CD4-positive, alpha-beta T cell (primary cell): ENCODE measurements at regions of chr5 and their contacts with region 1.

Region 1: DNA sequence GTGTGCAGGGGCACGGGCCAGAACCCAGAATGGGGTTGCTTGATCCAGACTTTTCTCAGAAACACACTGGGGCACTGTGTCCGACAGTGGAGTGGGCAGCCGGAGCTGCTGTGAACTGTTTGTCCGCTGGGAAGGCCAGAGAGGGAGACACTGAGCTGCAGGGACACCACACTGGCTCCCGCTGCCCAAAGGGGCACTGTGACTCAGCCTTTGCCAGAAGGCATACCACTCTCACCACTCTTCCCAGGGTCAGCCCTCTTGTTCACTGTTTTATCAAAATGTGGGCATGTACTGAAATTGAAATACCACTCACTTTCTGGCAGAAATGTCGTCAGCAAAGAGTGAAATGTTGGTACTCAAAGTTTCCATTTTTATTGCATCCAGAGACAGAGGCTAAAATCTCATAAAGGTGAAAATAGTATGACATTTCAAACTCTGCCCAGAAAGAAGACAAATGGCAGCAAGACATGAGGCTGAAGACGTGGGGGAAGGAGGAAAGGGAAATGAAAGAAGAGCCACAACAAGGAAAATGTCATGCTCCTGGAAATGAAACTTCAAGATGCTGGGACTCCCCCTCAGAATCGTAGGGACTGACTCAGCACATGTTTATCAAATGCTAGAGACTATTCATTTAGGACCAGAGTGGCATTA is 4.5 kb upstream of the IL7R start:
- DNase-seq: peak in 6 of 14 experiments; percentile 15 to 84 (median 70)
- ATAC-seq: no peak
- H3K4me3 ChIP-seq: peak overlapping the region; percentile 88
- H3K4me3 Mint-ChIP-seq: peak overlapping the region; percentile 80
- H3K27ac ChIP-seq: peak overlapping the region; percentile 97 to 98
- H3K27ac Mint-ChIP-seq: peak overlapping the region; percentile 99
- H3K4me1 ChIP-seq: peaks cover 50% of the 10 kb centered on the region
- H3K4me1 Mint-ChIP-seq: peaks cover 85% of the 10 kb centered on the region
- H3K27me3 ChIP-seq: no peaks in the 10 kb centered on the region
- H3K27me3 Mint-ChIP-seq: no peaks in the 10 kb centered on the region
- CTCF ChIP-seq: no peak

Region 2: GRCh38 chr5:35656721-35657120 is 195.5 kb before region 1 on chr5:
- CTCF ChIA-PET with region 1: interaction called, 10 read pairs
- POLR2A ChIA-PET with region 1: interaction called, 64 read pairs
- intact Hi-C with region 1: no loop called
- DNase-seq: no peak
- ATAC-seq: no peak
- H3K4me3 ChIP-seq: no peak overlapping the region
- H3K4me3 Mint-ChIP-seq: no peak overlapping the region
- H3K27ac ChIP-seq: no peak overlapping the region
- H3K27ac Mint-ChIP-seq: no peak overlapping the region
- H3K4me1 ChIP-seq: no peaks in the 10 kb centered on the region
- H3K4me1 Mint-ChIP-seq: peaks cover 31% of the 10 kb centered on the region
- H3K27me3 ChIP-seq: no peaks in the 10 kb centered on the region
- H3K27me3 Mint-ChIP-seq: no peaks in the 10 kb centered on the region
- CTCF ChIP-seq: no peak

Region 3: DNA sequence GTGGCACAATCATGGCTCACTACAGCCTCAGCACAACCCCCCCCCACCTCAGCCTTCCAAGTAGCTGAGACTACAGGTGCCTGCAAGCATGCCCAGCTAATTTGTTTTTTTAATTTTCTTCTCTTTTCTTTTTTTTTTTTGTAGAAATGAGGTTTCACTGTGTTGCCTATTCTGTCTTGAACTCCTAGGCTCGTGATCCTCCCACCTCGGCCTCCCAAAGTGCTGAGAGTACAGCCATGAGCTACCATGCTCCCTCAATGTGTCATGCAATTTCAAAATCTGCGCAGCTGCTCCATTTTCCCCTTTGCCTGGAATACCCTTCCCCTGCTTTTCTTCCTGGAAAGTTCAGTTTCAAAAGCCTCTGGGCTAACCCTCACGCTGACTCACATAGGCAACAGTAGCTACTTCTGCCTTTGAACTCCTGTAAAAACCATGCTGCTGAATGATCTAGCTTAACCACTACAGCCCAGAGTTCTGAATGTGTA is 66.6 kb before region 1 on chr5:
- CTCF ChIA-PET with region 1: interaction called, 7 read pairs
- POLR2A ChIA-PET with region 1: interaction called, 384 read pairs
- intact Hi-C with region 1: no loop called
- DNase-seq: peak in 4 of 14 experiments; percentile 15 to 43 (median 25)
- ATAC-seq: peak; percentile 71
- H3K4me3 ChIP-seq: no peak overlapping the region
- H3K4me3 Mint-ChIP-seq: peak overlapping the region; percentile 64
- H3K27ac ChIP-seq: no peak overlapping the region
- H3K27ac Mint-ChIP-seq: peak overlapping the region; percentile 79
- H3K4me1 ChIP-seq: peaks cover 40% of the 10 kb centered on the region
- H3K4me1 Mint-ChIP-seq: peaks cover 86% of the 10 kb centered on the region
- H3K27me3 ChIP-seq: no peaks in the 10 kb centered on the region
- H3K27me3 Mint-ChIP-seq: no peaks in the 10 kb centered on the region
- CTCF ChIP-seq: no peak

Region 4: GRCh38 chr5:35815089-35815936 is 36.9 kb before region 1 on chr5:
- CTCF ChIA-PET with region 1: interaction called, 9 read pairs
- POLR2A ChIA-PET with region 1: interaction called, 576 read pairs
- intact Hi-C with region 1: loop called (anchors 1 to 5 kb)
- DNase-seq: peak in 4 of 14 experiments; percentile 47 to 75 (median 69)
- ATAC-seq: peak; percentile 27
- H3K4me3 ChIP-seq: no peak overlapping the region
- H3K4me3 Mint-ChIP-seq: no peak overlapping the region
- H3K27ac ChIP-seq: peak overlapping the region; percentile 8 to 59
- H3K27ac Mint-ChIP-seq: no peak overlapping the region
- H3K4me1 ChIP-seq: peaks cover 65% of the 10 kb centered on the region
- H3K4me1 Mint-ChIP-seq: peaks cover 39% of the 10 kb centered on the region
- H3K27me3 ChIP-seq: no peaks in the 10 kb centered on the region
- H3K27me3 Mint-ChIP-seq: no peaks in the 10 kb centered on the region
- CTCF ChIP-seq: peak; percentile 64

Region 5: DNA sequence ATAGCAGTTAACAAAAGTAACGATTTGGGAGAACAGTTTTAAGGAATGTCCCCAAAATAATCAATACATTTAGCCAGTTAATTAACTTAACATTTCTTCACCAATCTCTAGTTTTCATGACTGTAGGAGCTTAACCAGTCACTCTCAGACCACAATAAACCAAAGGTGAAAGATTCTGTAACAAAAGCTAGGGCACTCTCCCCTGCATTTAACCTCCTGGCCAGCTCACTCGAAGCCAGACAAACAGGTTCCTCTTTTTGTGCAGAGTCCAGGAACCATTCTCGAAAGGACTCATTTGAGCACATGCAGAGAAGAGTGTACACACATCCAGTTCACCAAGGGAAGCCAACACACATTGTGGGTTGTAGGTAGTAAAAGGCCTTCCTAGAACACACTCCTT is 10.9 kb after region 1 on chr5:
- CTCF ChIA-PET with region 1: interaction called, 4 read pairs
- POLR2A ChIA-PET with region 1: interaction called, 33 read pairs
- intact Hi-C with region 1: no loop called
- DNase-seq: no peak
- ATAC-seq: no peak
- H3K4me3 ChIP-seq: peak overlapping the region; percentile 88
- H3K4me3 Mint-ChIP-seq: peak overlapping the region; percentile 93
- H3K27ac ChIP-seq: peak overlapping the region; percentile 43 to 63
- H3K27ac Mint-ChIP-seq: peak overlapping the region; percentile 99
- H3K4me1 ChIP-seq: peaks cover 18% of the 10 kb centered on the region
- H3K4me1 Mint-ChIP-seq: peaks cover 83% of the 10 kb centered on the region
- H3K27me3 ChIP-seq: no peaks in the 10 kb centered on the region
- H3K27me3 Mint-ChIP-seq: no peaks in the 10 kb centered on the region
- CTCF ChIP-seq: no peak

Region 6: DNA sequence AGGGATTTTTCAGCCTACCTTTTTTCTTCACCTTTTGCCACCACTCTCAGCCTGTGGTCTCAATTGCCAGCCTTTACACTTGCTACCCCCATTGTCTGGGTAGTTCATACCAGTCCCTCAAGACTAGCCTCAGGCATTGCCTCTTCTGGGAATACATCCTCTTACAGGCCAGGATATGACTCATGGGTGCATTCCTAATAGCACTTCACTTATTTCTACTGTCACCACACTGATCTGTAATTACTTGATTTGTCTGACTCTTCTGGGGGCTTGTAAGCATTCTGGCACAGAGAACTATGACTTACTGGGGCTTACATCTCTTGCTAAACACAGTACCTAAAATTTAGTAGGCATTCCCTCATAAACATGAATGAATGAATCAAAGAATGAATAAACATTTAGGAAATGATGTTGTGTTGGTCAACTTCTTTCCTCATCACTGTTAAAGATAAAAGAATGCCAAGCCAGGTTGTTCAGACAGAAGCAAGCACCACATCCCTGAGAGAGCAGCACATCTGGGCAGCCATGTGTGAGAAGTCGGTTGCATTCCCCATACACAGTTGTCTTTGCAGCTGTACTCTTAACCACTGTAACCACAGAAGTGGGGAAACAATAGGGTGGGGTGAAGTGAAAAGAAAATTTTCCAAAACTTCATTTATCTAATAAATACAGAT is 32.0 kb after region 1 on chr5:
- CTCF ChIA-PET with region 1: no interaction called
- POLR2A ChIA-PET with region 1: interaction called, 82 read pairs
- intact Hi-C with region 1: loop called in 1 of 2 experiments (anchors 2 kb)
- DNase-seq: peak in 2 of 14 experiments; percentile 50 to 51
- ATAC-seq: peak; percentile 27
- H3K4me3 ChIP-seq: no peak overlapping the region
- H3K4me3 Mint-ChIP-seq: no peak overlapping the region
- H3K27ac ChIP-seq: no peak overlapping the region
- H3K27ac Mint-ChIP-seq: peak overlapping the region; percentile 55
- H3K4me1 ChIP-seq: peaks cover 21% of the 10 kb centered on the region
- H3K4me1 Mint-ChIP-seq: peaks cover 55% of the 10 kb centered on the region
- H3K27me3 ChIP-seq: no peaks in the 10 kb centered on the region
- H3K27me3 Mint-ChIP-seq: no peaks in the 10 kb centered on the region
- CTCF ChIP-seq: no peak

Region 7: DNA sequence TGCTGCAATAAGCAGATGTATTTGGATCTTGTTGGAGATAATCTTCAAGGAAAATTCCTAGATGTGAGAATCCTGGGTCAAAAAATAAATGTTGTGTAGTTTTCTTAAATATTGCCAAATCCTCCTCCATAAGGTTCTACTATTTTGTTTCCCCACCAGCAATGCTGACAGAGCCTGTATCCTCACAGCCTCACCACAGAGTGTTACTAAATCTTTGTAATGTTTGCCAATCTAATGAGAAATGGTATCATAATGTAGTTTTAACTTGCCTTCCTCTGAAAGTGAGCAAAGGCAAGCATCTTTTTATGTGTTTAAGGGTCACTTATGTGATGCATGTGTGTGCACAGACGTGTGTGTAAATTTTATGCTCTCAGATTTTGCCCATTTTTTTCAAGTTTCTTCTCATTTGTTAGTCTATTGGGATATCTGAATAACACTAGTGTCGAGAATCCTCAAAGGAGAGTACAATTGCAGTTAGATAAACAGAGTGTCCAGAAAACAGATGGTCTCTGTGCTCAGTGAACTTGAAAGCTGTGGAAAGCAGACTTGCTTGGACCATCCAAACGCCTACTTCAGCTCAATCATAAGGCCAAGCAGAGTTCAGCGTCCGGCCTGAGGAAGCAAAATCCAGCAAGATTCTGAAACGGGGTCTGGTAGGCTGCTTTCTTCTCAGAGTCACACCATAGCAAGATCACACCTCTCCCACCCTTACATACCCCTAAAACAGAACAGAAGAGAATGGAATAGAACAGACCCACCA is 174.7 kb after region 1 on chr5:
- CTCF ChIA-PET with region 1: no interaction called
- POLR2A ChIA-PET with region 1: no interaction called
- intact Hi-C with region 1: no loop called
- DNase-seq: no peak
- ATAC-seq: no peak
- H3K4me3 ChIP-seq: no peak overlapping the region
- H3K4me3 Mint-ChIP-seq: no peak overlapping the region
- H3K27ac ChIP-seq: no peak overlapping the region
- H3K27ac Mint-ChIP-seq: no peak overlapping the region
- H3K4me1 ChIP-seq: no peaks in the 10 kb centered on the region
- H3K4me1 Mint-ChIP-seq: no peaks in the 10 kb centered on the region
- H3K27me3 ChIP-seq: no peaks in the 10 kb centered on the region
- H3K27me3 Mint-ChIP-seq: peaks cover 25% of the 10 kb centered on the region
- CTCF ChIP-seq: no peak

Region 8: DNA sequence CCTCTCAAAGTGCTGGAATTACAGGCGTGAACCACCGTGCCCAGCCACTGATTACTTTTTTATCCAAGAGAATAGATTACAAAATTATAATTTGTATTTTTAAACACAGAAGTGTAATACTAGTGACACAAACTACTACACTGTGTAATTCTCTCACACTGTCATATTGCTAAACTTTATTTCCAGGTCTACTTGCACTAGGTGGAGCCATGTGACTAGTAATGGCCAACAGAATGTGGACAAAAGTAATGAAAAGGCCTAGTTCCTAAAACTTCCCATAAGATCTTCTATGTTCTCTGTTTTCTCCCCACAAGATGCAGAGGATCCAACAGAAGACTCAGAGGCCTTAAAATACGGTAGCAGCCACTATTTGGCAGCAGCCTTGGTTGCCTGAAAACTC is 362.2 kb after region 1 on chr5:
- CTCF ChIA-PET with region 1: no interaction called
- POLR2A ChIA-PET with region 1: no interaction called
- intact Hi-C with region 1: no loop called
- DNase-seq: peak in 2 of 14 experiments; percentile 9
- ATAC-seq: no peak
- H3K4me3 ChIP-seq: no peak overlapping the region
- H3K4me3 Mint-ChIP-seq: no peak overlapping the region
- H3K27ac ChIP-seq: no peak overlapping the region
- H3K27ac Mint-ChIP-seq: no peak overlapping the region
- H3K4me1 ChIP-seq: no peaks in the 10 kb centered on the region
- H3K4me1 Mint-ChIP-seq: no peaks in the 10 kb centered on the region
- H3K27me3 ChIP-seq: no peaks in the 10 kb centered on the region
- H3K27me3 Mint-ChIP-seq: no peaks in the 10 kb centered on the region
- CTCF ChIP-seq: peak; percentile 35